Motor neuron (in vitro differentiated cells): ENCODE measurements at regions of chr6 and their contacts with region 1.

Region 1: GRCh38 chr6:112337209-112337638 is 9.9 kb upstream of the RFPL4B start:
- ATAC-seq: peak; percentile 91 to 100 (median 100)
- H3K4me3 ChIP-seq: no peak overlapping the region
- H3K27ac ChIP-seq: no peak overlapping the region
- H3K4me1 ChIP-seq: peaks cover 7 to 11% of the 10 kb centered on the region in 2 donors

Region 2: GRCh38 chr6:112029045-112029822 is 308.0 kb before region 1 on chr6:
- in situ Hi-C with region 1: no loop called
- ATAC-seq: peak in 3 of 8 experiments; percentile 10 to 61 (median 46)
- H3K4me3 ChIP-seq: no peak overlapping the region
- H3K27ac ChIP-seq: no peak overlapping the region
- H3K4me1 ChIP-seq: peaks cover 6 to 7% of the 10 kb centered on the region in 2 donors

Region 3: GRCh38 chr6:112117554-112117953 is 219.7 kb before region 1 on chr6:
- in situ Hi-C with region 1: no loop called
- ATAC-seq: peak in 2 of 8 experiments; percentile 9 to 13
- H3K4me3 ChIP-seq: no peak overlapping the region
- H3K27ac ChIP-seq: no peak overlapping the region
- H3K4me1 ChIP-seq: peaks cover 0 to 5% of the 10 kb centered on the region in 2 donors

Region 4: GRCh38 chr6:112502351-112503090 is 165.3 kb after region 1 on chr6:
- in situ Hi-C with region 1: loop called in 1 of 9 experiments (anchors 25 kb)
- ATAC-seq: peak in 5 of 8 experiments; percentile 29 to 48 (median 41)
- H3K4me3 ChIP-seq: peak overlapping the region in 4 of 5 donors; percentile 5 to 21 (median 9)
- H3K27ac ChIP-seq: peak overlapping the region; percentile 74 to 80
- H3K4me1 ChIP-seq: peaks cover 35 to 57% of the 10 kb centered on the region in 2 donors

Region 5: GRCh38 chr6:112594886-112595594 is 257.8 kb after region 1 on chr6:
- in situ Hi-C with region 1: loop called in 1 of 9 experiments (anchors 10 kb)
- ATAC-seq: peak in 3 of 8 experiments; percentile 27 to 68 (median 47)
- H3K4me3 ChIP-seq: no peak overlapping the region
- H3K27ac ChIP-seq: no peak overlapping the region
- H3K4me1 ChIP-seq: no peaks in the 10 kb centered on the region

Region 6: DNA sequence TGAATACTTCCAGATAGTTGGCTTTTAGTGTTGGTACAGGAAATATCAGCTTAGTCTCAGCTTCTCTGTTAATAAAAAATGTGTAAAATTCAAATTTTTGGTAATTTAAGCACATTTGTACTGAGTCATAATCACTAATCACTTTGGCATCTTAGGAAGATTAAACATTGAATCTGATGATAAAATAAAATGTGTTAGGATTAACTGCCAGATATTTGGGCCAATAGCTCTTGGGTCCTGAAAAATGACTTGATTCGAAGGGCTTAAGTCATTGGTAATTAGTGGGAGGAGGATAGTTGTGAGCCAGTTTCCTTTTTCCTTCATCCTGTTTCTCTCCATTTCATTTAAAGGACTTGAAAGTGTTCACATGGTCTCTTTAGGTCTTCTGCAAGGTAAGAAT is 436.0 kb after region 1 on chr6:
- in situ Hi-C with region 1: loop called in 2 of 9 experiments (anchors 25 kb)
- ATAC-seq: no peak
- H3K4me3 ChIP-seq: no peak overlapping the region
- H3K27ac ChIP-seq: no peak overlapping the region
- H3K4me1 ChIP-seq: no peaks in the 10 kb centered on the region

Region 7: DNA sequence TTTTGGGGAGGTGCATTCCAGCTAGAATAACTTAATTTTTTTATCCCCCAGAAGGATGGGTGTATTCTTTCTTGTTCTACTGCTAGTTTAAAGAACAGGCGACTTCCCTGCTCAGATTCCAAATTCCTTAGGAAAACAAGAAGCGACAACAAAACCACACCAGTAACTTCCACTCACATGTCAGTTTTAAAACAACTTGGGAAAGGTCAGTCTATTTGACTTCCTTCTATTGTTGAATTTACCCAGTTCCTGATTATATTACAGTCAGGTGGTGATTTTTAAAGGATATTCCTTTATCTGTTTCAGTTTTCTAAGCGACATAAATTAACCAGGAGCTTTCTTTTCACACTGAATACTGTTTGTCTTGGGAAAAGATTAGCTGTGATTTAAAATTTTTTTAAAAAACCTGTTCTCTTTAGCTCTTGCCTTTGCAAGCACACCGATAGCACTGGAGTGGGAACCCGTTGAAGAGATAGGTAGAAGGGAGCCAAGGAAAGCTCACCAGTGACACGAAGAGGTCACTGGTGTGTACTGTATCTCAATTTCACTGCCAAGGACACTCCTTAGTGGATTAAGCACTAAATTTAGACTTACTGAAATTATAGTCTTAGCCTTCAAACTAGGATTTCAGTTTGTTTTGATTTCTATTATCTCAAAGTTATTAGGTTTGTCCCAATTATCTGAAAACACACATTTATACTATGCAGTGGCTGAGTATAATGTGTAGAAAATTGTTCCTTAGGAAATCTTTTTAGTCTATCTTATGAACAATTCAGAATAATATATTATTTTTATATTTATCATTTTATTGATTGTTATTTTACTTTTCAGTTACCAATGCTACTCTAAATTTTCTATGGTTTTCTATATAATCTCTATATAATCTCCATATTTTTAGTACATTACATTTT is 1542.2 kb after region 1 on chr6:
- in situ Hi-C with region 1: loop called in 2 of 9 experiments (anchors 25 kb)
- ATAC-seq: peak; percentile 80 to 100 (median 99)
- H3K4me3 ChIP-seq: no peak overlapping the region
- H3K27ac ChIP-seq: no peak overlapping the region
- H3K4me1 ChIP-seq: peaks cover 0 to 4% of the 10 kb centered on the region in 2 donors

Region 8: DNA sequence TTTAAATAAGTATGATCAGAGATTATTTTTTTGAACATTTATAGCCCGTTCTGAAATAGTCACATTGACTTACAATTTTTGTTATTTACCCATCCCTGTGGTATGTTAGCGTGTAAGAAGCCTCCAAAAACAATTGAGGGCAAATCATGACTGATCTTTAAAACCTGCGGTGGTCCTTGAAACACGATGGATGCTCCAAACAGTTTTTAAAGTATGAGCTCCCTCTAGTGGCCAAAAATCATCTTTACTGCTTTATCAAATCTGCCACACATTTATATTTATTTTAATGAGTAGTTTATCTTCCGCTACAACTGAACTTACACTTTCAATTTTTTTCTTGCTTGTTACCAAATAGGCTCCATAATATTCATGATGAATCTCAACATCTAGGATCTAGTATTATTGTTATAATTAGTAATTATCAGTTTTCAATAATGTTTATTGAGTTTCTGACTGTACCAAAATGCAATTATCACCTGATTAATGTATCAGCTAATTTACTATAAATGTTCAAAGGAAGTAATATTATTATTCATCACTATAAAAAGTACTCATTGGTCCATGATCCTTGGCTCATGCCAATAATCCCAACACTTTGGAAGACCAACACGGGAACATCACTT is 1572.1 kb after region 1 on chr6:
- in situ Hi-C with region 1: loop called in 2 of 9 experiments (anchors 25 kb)
- ATAC-seq: peak in 5 of 8 experiments; percentile 29 to 62 (median 44)
- H3K4me3 ChIP-seq: no peak overlapping the region
- H3K27ac ChIP-seq: no peak overlapping the region
- H3K4me1 ChIP-seq: no peaks in the 10 kb centered on the region